ENCODE measurements at regions of chr6 and their contacts with region 1.

Region 1: DNA sequence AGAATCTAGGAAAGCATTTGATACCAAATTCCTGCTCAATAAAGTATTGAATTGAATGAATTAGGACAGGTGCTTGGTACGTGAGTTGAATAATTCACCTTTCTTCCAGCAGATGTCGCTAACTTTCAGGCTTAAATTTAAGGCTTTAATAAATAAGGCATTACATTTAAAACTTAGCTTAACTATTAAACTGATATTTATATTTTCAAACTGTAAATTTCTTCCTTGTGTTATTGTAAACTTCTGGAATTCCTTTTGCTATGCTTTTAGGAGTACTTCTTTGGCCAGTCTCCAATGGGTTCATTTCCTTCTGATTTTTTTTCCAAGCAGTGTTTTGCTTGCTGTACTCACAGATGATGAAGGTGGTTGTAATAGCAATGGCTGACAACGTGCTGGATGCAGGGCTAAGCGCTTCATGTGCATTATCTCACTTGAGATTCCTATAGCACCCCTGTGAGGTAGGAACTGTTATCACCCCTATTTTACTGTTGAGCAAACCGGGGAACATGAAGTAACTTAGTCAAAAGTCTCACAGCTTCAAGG is 71.3 kb upstream of the SLC2A12 start:
- DNase-seq: no peak
- H3K4me3 ChIP-seq: no peak overlapping the region
- CTCF ChIP-seq: peak; percentile 45

Region 2: DNA sequence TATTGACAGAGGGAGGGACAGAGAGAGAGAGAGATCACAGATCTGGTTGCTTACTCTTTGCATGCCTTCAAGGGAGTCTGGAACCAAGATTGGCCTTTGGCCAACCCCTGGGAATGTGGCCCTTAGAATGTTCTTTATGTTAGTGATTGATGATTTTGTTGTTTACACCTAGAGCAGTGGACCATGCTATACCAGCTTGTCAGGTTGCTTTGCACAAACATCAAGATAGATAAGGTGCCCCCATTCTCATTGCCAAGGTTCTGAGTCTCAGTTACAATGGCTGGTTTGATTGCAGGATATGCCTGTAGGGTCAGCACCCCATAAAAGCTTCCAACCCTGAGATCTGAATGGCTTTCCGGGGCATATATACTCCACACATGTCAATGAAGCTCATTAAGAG is 17.8 kb before region 1 on chr6:
- CTCF ChIA-PET with region 1: interaction called, 186 read pairs
- POLR2A ChIA-PET with region 1: no interaction called
- DNase-seq: no peak
- H3K4me3 ChIP-seq: no peak overlapping the region
- CTCF ChIP-seq: no peak

Region 3: GRCh38 chr6:134111062-134111677 is 12.6 kb before region 1 on chr6:
- CTCF ChIA-PET with region 1: interaction called, 186 read pairs
- POLR2A ChIA-PET with region 1: no interaction called
- DNase-seq: no peak
- H3K4me3 ChIP-seq: no peak overlapping the region
- CTCF ChIP-seq: peak; percentile 69

Region 4: GRCh38 chr6:134138226-134138975 is 14.7 kb after region 1 on chr6:
- CTCF ChIA-PET with region 1: interaction called, 53 read pairs
- POLR2A ChIA-PET with region 1: no interaction called
- DNase-seq: no peak
- H3K4me3 ChIP-seq: no peak overlapping the region
- CTCF ChIP-seq: no peak

Region 5: DNA sequence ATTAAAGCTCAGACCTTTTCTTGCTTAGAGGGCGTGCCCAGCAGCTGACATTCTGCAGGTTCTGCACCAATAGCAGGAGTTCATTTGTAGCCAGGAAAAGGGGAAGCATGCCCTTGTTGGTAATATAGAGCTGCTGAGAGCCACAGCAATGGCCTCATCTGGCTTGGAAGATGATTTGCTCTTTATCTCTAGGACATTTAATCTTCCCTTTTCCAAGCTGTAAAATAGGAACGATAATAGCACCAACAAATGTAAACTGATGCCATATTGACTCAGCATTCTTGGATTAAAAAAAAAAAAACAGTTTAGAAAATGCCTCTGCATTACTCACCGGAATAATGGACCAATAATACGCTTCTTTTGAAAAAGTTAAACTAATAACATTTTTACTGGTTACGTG is 22.0 kb after region 1 on chr6:
- CTCF ChIA-PET with region 1: interaction called, 39 read pairs
- POLR2A ChIA-PET with region 1: no interaction called
- DNase-seq: no peak
- H3K4me3 ChIP-seq: no peak overlapping the region
- CTCF ChIP-seq: no peak

Measured in AG04449 (cell line).